B cell (primary cell): ENCODE measurements at regions of chr17 and their contacts with region 1.

Region 1: GRCh38 chr17:18038861-18039534 is at the starts of genes ATPAF2 and GID4:
- DNase-seq: peak; percentile 100
- ATAC-seq: peak; percentile 86
- H3K4me3 ChIP-seq: peak within 1 kb of the TSS; percentile 85 to 100 (median 96)
- H3K4me3 Mint-ChIP-seq: peak within 1 kb of the TSS; percentile 93
- H3K27ac ChIP-seq: peak within 1 kb of the TSS; percentile 43 to 90
- H3K27ac Mint-ChIP-seq: peak within 1 kb of the TSS; percentile 92
- H3K4me1 ChIP-seq: peaks cover 24 to 33% of the 10 kb centered on the region in 2 donors
- H3K4me1 Mint-ChIP-seq: peaks cover 61% of the 10 kb centered on the region
- H3K27me3 ChIP-seq: no peaks in the 10 kb centered on the region
- H3K27me3 Mint-ChIP-seq: no peaks in the 10 kb centered on the region
- CTCF ChIP-seq: no peak
- total RNA-seq, gene ATPAF2: 73.5 and 79.5 TPM in 2 replicates
- total RNA-seq, gene GID4: 11.6 and 11.8 TPM in 2 replicates

Region 2: DNA sequence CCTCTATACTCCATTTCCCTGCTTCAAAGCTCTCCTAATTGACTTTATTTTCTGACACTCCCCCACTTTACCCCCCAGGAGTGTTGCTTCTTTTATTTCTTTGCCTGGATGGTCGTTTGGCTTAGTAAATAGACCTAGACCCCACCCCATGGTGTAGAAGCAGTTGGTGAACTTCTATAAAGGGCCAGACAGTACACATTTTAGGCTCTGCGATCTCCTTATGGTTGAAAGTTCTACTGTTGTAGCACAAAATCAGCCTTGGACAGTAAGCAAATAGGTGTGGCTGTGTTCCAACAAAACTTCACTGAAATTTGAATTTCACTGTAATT is 1501.9 kb before region 1 on chr17:
- CTCF ChIA-PET with region 1: no interaction called
- POLR2A ChIA-PET with region 1: no interaction called
- intact Hi-C with region 1: loop called (anchors 5 kb)
- DNase-seq: no peak
- ATAC-seq: no peak
- H3K4me3 ChIP-seq: no peak overlapping the region
- H3K4me3 Mint-ChIP-seq: peak overlapping the region; percentile 98
- H3K27ac ChIP-seq: no peak overlapping the region
- H3K27ac Mint-ChIP-seq: peak overlapping the region; percentile 99
- H3K4me1 ChIP-seq: peaks cover 9 to 13% of the 10 kb centered on the region in 2 donors
- H3K4me1 Mint-ChIP-seq: peaks cover 18% of the 10 kb centered on the region
- H3K27me3 ChIP-seq: no peaks in the 10 kb centered on the region
- H3K27me3 Mint-ChIP-seq: no peaks in the 10 kb centered on the region
- CTCF ChIP-seq: no peak

Region 3: GRCh38 chr17:17280613-17281549 is 758.1 kb before region 1 on chr17 and contains the start of gene COPS3:
- CTCF ChIA-PET with region 1: no interaction called
- POLR2A ChIA-PET with region 1: no interaction called
- intact Hi-C with region 1: loop called (anchors 2 kb)
- DNase-seq: peak; percentile 99
- ATAC-seq: peak; percentile 88
- H3K4me3 ChIP-seq: peak within 1 kb of the TSS; percentile 67 to 99 (median 98)
- H3K4me3 Mint-ChIP-seq: peak within 1 kb of the TSS; percentile 86
- H3K27ac ChIP-seq: peak within 1 kb of the TSS; percentile 87 to 98
- H3K27ac Mint-ChIP-seq: peak within 1 kb of the TSS; percentile 85
- H3K4me1 ChIP-seq: peaks cover 20% of the 10 kb centered on the region in 2 donors
- H3K4me1 Mint-ChIP-seq: peaks cover 36% of the 10 kb centered on the region
- H3K27me3 ChIP-seq: no peaks in the 10 kb centered on the region
- H3K27me3 Mint-ChIP-seq: no peaks in the 10 kb centered on the region
- CTCF ChIP-seq: no peak
- total RNA-seq, gene COPS3: 45.5 and 46.9 TPM in 2 replicates

Region 4: GRCh38 chr17:17663160-17664063 is 375.6 kb before region 1 on chr17:
- CTCF ChIA-PET with region 1: interaction called, 3 read pairs
- POLR2A ChIA-PET with region 1: no interaction called
- intact Hi-C with region 1: loop called (anchors 2 kb)
- DNase-seq: peak; percentile 72
- ATAC-seq: peak; percentile 85
- H3K4me3 ChIP-seq: peak overlapping the region in 1 of 5 experiments; percentile 13
- H3K4me3 Mint-ChIP-seq: peak overlapping the region; percentile 70
- H3K27ac ChIP-seq: no peak overlapping the region
- H3K27ac Mint-ChIP-seq: peak overlapping the region; percentile 23
- H3K4me1 ChIP-seq: peaks cover 10 to 17% of the 10 kb centered on the region in 2 donors
- H3K4me1 Mint-ChIP-seq: peaks cover 26% of the 10 kb centered on the region
- H3K27me3 ChIP-seq: no peaks in the 10 kb centered on the region
- H3K27me3 Mint-ChIP-seq: no peaks in the 10 kb centered on the region
- CTCF ChIP-seq: no peak

Region 5: DNA sequence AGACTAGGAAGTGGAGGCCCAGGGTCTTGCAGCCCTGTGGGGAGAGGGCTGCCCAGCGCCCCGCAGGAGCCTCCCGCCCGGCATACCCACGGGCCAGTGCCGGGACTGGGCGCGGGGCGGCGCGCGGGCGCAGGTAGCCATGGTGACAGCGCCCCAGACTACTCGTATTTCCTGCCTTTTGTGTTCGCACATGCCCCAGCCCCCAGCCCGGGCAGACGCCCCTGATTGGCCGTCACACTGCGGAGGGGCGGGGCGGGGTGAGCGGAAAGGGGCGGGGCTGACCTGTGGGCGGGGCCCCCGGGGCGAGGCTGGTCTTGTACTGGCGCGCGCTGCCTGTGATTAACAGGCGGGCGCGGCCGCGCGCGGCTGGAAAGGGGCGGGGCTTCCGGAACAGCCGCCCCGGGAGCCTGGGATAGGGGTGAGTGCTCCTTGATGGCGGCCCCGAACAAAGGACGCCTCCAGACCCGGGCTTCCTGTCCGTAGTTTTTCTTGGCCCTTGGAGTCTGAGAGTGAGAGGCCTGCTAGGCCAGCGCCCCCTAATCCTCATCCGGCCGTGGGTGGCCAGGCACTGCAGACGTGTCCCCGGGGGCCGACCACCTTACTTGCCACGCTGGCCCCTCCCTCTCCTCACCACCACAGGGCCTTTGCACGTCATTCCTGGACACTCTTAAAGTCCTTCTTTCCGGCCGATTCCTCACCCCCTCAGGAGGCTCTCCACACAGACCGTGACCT is 286.7 kb before region 1 on chr17:
- CTCF ChIA-PET with region 1: no interaction called
- POLR2A ChIA-PET with region 1: interaction called, 3 read pairs
- intact Hi-C with region 1: loop called (anchors 1 kb)
- DNase-seq: peak; percentile 95
- ATAC-seq: peak; percentile 85
- H3K4me3 ChIP-seq: peak overlapping the region; percentile 47 to 81 (median 71)
- H3K4me3 Mint-ChIP-seq: peak overlapping the region; percentile 91
- H3K27ac ChIP-seq: peak overlapping the region; percentile 89 to 93
- H3K27ac Mint-ChIP-seq: peak overlapping the region; percentile 96
- H3K4me1 ChIP-seq: peaks cover 75 to 88% of the 10 kb centered on the region in 2 donors
- H3K4me1 Mint-ChIP-seq: peaks cover 77% of the 10 kb centered on the region
- H3K27me3 ChIP-seq: no peaks in the 10 kb centered on the region
- H3K27me3 Mint-ChIP-seq: no peaks in the 10 kb centered on the region
- CTCF ChIP-seq: peak; percentile 43

Region 6: DNA sequence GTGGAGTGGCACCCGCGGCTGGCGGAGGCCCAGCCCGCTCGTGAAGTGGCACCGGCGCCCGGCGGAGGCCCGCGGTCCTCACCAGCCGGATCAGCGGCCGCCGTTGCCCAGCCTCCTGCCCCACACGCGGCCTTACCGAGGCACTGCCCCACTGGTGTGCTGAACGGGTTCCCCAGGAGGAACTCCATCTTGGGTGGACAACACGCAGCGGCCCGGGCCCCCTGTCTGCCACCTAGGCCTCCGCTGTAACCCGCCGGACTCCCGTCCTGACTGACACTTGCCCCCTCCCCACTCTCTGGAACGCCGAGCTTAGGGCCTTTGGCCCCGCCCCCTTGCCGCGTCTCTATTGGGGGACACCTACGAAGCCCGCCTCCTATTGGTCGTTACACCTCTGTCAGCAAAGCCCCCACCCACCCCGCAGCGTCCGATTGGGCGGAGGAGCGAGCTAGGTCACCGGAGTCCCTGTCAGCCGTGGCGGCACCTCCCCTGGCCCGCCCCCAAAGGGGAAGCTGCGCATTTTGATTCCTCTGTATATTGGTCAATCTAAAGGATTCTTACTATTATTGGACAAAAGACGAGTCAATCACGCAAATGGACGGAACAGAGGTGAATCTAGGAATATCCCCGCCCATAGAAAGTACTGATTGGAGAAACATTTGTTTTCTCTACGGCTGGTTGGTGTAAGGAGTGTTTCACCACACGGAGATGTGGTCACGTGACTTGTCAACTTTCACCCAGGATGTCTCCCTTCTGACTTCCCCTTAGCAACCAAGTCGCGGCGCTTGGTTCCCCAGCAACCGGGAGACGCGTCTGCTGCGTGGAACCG is 66.7 kb before region 1 on chr17 and contains the starts of genes DRC3 and TOM1L2:
- CTCF ChIA-PET with region 1: interaction called, 3 read pairs
- POLR2A ChIA-PET with region 1: no interaction called
- intact Hi-C with region 1: loop called (anchors 1 kb)
- DNase-seq: peak; percentile 100
- ATAC-seq: peak; percentile 90
- H3K4me3 ChIP-seq: peak within 1 kb of the TSS; percentile 41 to 82 (median 76)
- H3K4me3 Mint-ChIP-seq: peak within 1 kb of the TSS; percentile 97
- H3K27ac ChIP-seq: peak within 1 kb of the TSS; percentile 52 to 89
- H3K27ac Mint-ChIP-seq: peak within 1 kb of the TSS; percentile 96
- H3K4me1 ChIP-seq: peaks cover 12 to 17% of the 10 kb centered on the region in 2 donors
- H3K4me1 Mint-ChIP-seq: peaks cover 22% of the 10 kb centered on the region
- H3K27me3 ChIP-seq: no peaks in the 10 kb centered on the region
- H3K27me3 Mint-ChIP-seq: no peaks in the 10 kb centered on the region
- CTCF ChIP-seq: no peak
- total RNA-seq, gene DRC3: 0.17 TPM in 1 of 2 replicates, not detected in the other
- total RNA-seq, gene TOM1L2: 29.7 and 34.4 TPM in 2 replicates

Region 7: DNA sequence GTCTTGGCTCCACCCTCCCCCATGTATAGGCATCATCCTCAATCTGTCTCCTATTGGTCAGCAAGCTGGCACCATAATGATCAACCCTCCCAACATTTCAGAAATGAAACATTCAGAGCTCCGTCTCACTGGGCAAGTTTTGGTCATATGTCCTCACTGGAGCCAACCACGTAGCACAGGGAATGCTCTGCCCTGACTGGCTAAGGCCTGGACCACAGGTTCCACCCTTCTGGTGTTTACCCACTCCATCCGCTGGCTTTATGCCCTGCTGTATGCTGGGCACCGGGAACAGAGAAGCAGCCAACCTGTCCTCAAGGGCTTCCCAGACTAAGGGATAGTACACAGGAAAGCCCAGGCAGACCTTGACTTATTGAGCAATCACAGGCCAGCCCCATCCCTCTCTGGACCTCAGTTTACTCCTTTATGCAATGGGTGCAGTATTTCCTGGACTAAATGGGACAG is 90.1 kb after region 1 on chr17:
- CTCF ChIA-PET with region 1: no interaction called
- POLR2A ChIA-PET with region 1: no interaction called
- intact Hi-C with region 1: no loop called
- DNase-seq: no peak
- ATAC-seq: no peak
- H3K4me3 ChIP-seq: no peak overlapping the region
- H3K4me3 Mint-ChIP-seq: no peak overlapping the region
- H3K27ac ChIP-seq: no peak overlapping the region
- H3K27ac Mint-ChIP-seq: no peak overlapping the region
- H3K4me1 ChIP-seq: no peaks in the 10 kb centered on the region
- H3K4me1 Mint-ChIP-seq: no peaks in the 10 kb centered on the region
- H3K27me3 ChIP-seq: no peaks in the 10 kb centered on the region
- H3K27me3 Mint-ChIP-seq: no peaks in the 10 kb centered on the region
- CTCF ChIP-seq: no peak

Region 8: DNA sequence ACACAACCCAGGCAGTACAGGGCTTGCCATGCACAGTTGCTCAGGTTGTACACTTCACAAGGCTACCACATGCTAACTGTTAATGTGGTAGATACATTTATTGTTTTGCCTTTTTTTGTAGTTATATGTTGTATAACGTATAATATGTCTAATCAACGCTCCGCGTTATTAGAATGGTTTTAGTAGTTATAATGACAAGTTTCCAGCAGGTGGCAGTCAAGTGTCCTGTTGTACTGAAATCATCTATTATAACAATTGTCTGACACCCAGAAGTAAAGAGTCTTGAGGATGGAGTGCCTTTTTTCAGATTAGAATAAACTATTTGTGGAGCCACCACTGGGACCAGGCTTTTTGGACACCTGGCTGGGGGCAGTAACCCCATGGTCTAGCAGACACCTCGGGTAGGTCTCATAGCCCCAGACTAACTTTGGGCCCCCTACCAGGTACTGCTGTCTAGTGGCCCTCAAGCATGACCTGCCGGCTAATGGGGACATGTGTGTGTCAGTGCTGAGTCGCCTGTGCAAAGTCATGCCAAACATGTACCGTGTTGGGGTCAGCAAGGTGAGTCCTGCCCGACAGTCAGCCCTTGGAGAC is 102.3 kb after region 1 on chr17:
- CTCF ChIA-PET with region 1: no interaction called
- POLR2A ChIA-PET with region 1: no interaction called
- intact Hi-C with region 1: no loop called
- DNase-seq: peak; percentile 77
- ATAC-seq: peak; percentile 75
- H3K4me3 ChIP-seq: no peak overlapping the region
- H3K4me3 Mint-ChIP-seq: no peak overlapping the region
- H3K27ac ChIP-seq: no peak overlapping the region
- H3K27ac Mint-ChIP-seq: no peak overlapping the region
- H3K4me1 ChIP-seq: peaks cover 0 to 4% of the 10 kb centered on the region in 2 donors
- H3K4me1 Mint-ChIP-seq: peaks cover 5% of the 10 kb centered on the region
- H3K27me3 ChIP-seq: peaks cover 0 to 13% (median 1%) of the 10 kb centered on the region in 4 experiments
- H3K27me3 Mint-ChIP-seq: peaks cover 7% of the 10 kb centered on the region
- CTCF ChIP-seq: peak; percentile 81

Region 9: GRCh38 chr17:19977311-19978208 is 1938.6 kb after region 1 on chr17 and contains the start of gene AKAP10:
- CTCF ChIA-PET with region 1: no interaction called
- POLR2A ChIA-PET with region 1: no interaction called
- intact Hi-C with region 1: loop called (anchors 10 kb)
- DNase-seq: peak; percentile 94
- ATAC-seq: peak; percentile 87
- H3K4me3 ChIP-seq: peak within 1 kb of the TSS; percentile 83 to 93 (median 90)
- H3K4me3 Mint-ChIP-seq: peak within 1 kb of the TSS; percentile 99
- H3K27ac ChIP-seq: peak within 1 kb of the TSS; percentile 85 to 96
- H3K27ac Mint-ChIP-seq: peak within 1 kb of the TSS; percentile 98
- H3K4me1 ChIP-seq: peaks cover 23 to 40% of the 10 kb centered on the region in 2 donors
- H3K4me1 Mint-ChIP-seq: peaks cover 47% of the 10 kb centered on the region
- H3K27me3 ChIP-seq: no peaks in the 10 kb centered on the region
- H3K27me3 Mint-ChIP-seq: no peaks in the 10 kb centered on the region
- CTCF ChIP-seq: no peak
- total RNA-seq, gene AKAP10: 68.2 and 71.2 TPM in 2 replicates